ENCODE measurements at regions of chr5 and their contacts with region 1.

Region 1: GRCh38 chr5:170225326-170226128 is 7.3 kb upstream of the C5orf58 start:
- DNase-seq: peak; percentile 39 to 59 (median 55)
- H3K4me3 ChIP-seq: no peak overlapping the region
- H3K4me3 Mint-ChIP-seq: no peak overlapping the region
- H3K27ac ChIP-seq: no peak overlapping the region
- H3K27ac Mint-ChIP-seq: no peak overlapping the region
- H3K4me1 ChIP-seq: no peaks in the 10 kb centered on the region
- H3K4me1 Mint-ChIP-seq: peaks cover 3% of the 10 kb centered on the region
- H3K27me3 ChIP-seq: no peaks in the 10 kb centered on the region
- H3K27me3 Mint-ChIP-seq: peaks cover 0 to 3% (median 0%) of the 10 kb centered on the region in 3 donors
- CTCF ChIP-seq: peak; percentile 77

Region 2: GRCh38 chr5:170211575-170212334 is 13.8 kb before region 1 on chr5:
- intact Hi-C with region 1: no loop called
- DNase-seq: no peak
- H3K4me3 ChIP-seq: no peak overlapping the region
- H3K4me3 Mint-ChIP-seq: no peak overlapping the region
- H3K27ac ChIP-seq: no peak overlapping the region
- H3K27ac Mint-ChIP-seq: no peak overlapping the region
- H3K4me1 ChIP-seq: no peaks in the 10 kb centered on the region
- H3K4me1 Mint-ChIP-seq: no peaks in the 10 kb centered on the region
- H3K27me3 ChIP-seq: peaks cover 2 to 3% of the 10 kb centered on the region in 2 donors
- H3K27me3 Mint-ChIP-seq: peaks cover 0 to 10% (median 0%) of the 10 kb centered on the region in 3 donors
- CTCF ChIP-seq: no peak

Region 3: GRCh38 chr5:170338933-170339779 is 113.6 kb after region 1 on chr5:
- intact Hi-C with region 1: loop called in 1 of 2 experiments (anchors 5 kb)
- DNase-seq: peak in 2 of 3 donors; percentile 76 to 83
- H3K4me3 ChIP-seq: no peak overlapping the region
- H3K4me3 Mint-ChIP-seq: no peak overlapping the region
- H3K27ac ChIP-seq: peak overlapping the region in 1 of 2 donors; percentile 39
- H3K27ac Mint-ChIP-seq: peak overlapping the region; percentile 3 to 89 (median 63)
- H3K4me1 ChIP-seq: peaks cover 62 to 66% of the 10 kb centered on the region in 2 donors
- H3K4me1 Mint-ChIP-seq: peaks cover 62% of the 10 kb centered on the region
- H3K27me3 ChIP-seq: no peaks in the 10 kb centered on the region
- H3K27me3 Mint-ChIP-seq: peaks cover 0 to 9% (median 3%) of the 10 kb centered on the region in 3 donors
- CTCF ChIP-seq: peak; percentile 84

Region 4: GRCh38 chr5:170420780-170421412 is 195.4 kb after region 1 on chr5:
- intact Hi-C with region 1: loop called (anchors 1 to 2 kb)
- DNase-seq: peak; percentile 69 to 82 (median 80)
- H3K4me3 ChIP-seq: no peak overlapping the region
- H3K4me3 Mint-ChIP-seq: no peak overlapping the region
- H3K27ac ChIP-seq: no peak overlapping the region
- H3K27ac Mint-ChIP-seq: peak overlapping the region in 2 of 7 donors; percentile 9 to 78
- H3K4me1 ChIP-seq: peaks cover 4% of the 10 kb centered on the region in 2 donors
- H3K4me1 Mint-ChIP-seq: peaks cover 19% of the 10 kb centered on the region
- H3K27me3 ChIP-seq: no peaks in the 10 kb centered on the region
- H3K27me3 Mint-ChIP-seq: peaks cover 0 to 3% (median 2%) of the 10 kb centered on the region in 3 donors
- CTCF ChIP-seq: peak; percentile 82

Region 5: DNA sequence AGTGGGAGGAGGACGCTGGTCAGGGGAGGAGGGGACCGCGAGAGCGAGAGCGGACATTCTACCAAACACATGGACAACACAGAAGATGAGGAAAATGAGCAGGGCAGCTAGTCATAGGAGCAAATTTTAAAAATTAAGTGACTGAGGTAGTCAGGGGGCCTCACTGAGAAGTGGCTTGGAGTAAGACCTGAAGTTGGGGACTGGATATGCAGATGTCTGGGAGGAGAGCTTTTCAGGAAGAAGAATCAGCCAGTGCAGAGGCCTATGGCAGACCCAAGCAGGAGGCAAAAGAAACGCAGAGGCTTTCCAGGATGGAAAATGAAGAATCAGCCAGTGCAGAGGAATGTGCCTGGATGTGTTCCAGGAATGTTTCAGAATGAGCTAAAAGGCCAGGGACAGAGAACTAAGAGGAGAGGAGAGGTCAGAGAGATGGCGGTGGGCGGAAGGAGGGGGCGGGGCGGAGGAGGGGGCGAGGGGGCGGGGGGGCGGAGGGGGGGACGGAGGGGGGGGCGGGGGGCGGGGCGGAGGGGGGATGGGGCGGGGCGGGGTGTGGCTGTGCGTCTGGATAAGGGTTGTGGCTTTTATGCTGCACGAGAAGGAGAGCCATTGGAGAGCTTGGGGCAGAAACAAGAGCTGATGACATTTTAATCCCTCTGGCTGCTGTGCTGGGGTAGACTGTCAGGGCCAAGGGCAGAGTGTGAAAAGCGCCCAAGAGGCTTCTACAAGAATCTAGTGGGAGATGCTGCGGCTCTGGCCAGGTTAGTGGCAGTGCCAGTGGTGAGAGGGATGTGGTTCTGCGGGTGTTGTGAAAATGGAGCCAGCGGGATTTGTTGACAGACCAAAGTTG is 407.9 kb after region 1 on chr5:
- intact Hi-C with region 1: loop called (anchors 5 to 10 kb)
- DNase-seq: no peak
- H3K4me3 ChIP-seq: peak overlapping the region in 1 of 3 experiments; percentile 30
- H3K4me3 Mint-ChIP-seq: peak overlapping the region; percentile 52 to 76
- H3K27ac ChIP-seq: no peak overlapping the region
- H3K27ac Mint-ChIP-seq: peak overlapping the region in 3 of 7 donors; percentile 39 to 75 (median 58)
- H3K4me1 ChIP-seq: peaks cover 12% of the 10 kb centered on the region in 2 donors
- H3K4me1 Mint-ChIP-seq: peaks cover 20% of the 10 kb centered on the region
- H3K27me3 ChIP-seq: peaks cover 0 to 6% of the 10 kb centered on the region in 2 donors
- H3K27me3 Mint-ChIP-seq: peaks cover 12 to 28% (median 21%) of the 10 kb centered on the region in 3 donors
- CTCF ChIP-seq: peak; percentile 59

Region 6: DNA sequence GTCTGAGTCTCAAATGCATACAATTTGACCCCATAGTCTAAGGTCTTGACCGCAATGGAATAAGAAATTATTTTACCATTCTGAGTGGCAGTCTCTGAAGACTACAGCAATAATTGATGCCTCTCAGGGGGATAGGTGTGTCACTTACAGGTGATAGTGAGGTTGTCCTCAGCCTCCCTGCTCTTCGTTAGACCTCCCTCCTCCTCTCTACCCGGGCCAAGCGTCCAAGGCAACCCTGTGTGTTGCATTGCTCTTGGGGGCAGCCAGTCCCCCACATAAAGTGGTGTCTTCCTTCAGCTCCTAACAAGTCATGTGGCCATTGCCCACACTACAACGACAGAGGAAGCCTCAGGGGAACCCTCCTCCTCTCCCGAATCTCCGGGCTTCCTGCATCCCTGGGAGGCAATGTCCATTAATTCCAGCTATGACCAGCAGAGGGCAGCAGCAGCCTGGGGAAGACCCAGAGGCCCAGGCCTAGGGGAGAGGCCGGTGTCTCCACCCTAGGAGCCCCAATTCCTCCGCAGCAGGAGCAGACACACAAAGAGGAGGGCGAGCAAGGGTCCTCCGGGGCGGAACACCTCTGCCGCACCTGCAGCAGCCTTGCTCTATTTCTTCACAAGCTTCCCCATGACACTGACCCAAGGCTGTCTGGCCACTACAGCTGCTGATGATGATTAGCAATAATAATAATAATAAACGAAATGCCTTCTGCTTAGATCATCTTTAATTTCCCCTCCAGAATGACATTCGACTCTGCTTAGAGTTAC is 413.1 kb after region 1 on chr5:
- intact Hi-C with region 1: loop called (anchors 5 to 10 kb)
- DNase-seq: peak; percentile 27 to 46 (median 35)
- H3K4me3 ChIP-seq: no peak overlapping the region
- H3K4me3 Mint-ChIP-seq: peak overlapping the region in 1 of 2 donors; percentile 14
- H3K27ac ChIP-seq: no peak overlapping the region
- H3K27ac Mint-ChIP-seq: no peak overlapping the region
- H3K4me1 ChIP-seq: peaks cover 4 to 5% of the 10 kb centered on the region in 2 donors
- H3K4me1 Mint-ChIP-seq: peaks cover 7% of the 10 kb centered on the region
- H3K27me3 ChIP-seq: no peaks in the 10 kb centered on the region
- H3K27me3 Mint-ChIP-seq: peaks cover 9 to 18% (median 11%) of the 10 kb centered on the region in 3 donors
- CTCF ChIP-seq: peak; percentile 95

Measured in CD14-positive monocyte (primary cell).